ENCODE measurements at regions of chr10 and their contacts with region 1.

Region 1: DNA sequence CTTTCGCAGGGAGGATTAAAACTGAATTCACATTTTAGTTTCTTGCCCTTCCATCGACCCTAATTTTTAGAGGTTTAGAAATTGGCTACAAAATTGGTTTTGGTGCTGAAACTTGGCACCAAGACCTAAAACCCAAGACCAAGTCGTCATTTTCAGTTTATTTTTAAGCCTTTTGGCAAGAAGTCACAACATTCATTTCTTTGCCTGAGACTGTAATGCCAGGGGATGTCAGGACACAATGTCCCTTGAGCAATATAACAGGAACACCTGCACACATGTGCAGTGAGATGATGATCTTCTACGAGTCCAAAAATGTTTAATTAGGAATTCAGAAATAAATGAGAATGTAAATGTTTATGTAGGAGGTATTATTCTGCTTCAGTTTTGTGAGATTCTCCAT is 335.4 kb upstream of the ANKRD30A start:
- DNase-seq: no peak
- ATAC-seq: no peak

Region 2: DNA sequence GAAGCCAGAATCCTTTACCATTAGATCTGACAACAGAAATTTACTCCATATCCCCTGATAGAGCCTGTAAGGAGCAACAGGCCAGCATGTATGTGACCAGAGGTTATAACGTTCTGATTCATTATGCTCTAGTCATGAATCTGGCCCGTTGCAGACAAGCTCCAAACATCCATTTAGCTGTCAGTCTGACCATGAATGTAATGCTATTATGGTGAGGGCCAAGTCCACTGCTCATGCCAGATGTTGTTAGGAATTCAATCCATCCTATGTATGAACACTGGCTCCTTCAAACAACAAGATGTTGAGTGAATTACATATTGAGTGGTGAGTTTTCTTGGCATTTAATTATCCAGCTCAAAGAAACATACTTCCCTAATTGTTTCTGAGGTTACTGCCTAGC is 274.7 kb before region 1 on chr10:
- intact Hi-C with region 1: no loop called
- DNase-seq: no peak
- ATAC-seq: no peak

Region 3: GRCh38 chr10:36581237-36581636 is 208.7 kb before region 1 on chr10:
- intact Hi-C with region 1: no loop called
- DNase-seq: no peak
- ATAC-seq: no peak

Region 4: GRCh38 chr10:36801660-36802059 is 11.7 kb after region 1 on chr10:
- intact Hi-C with region 1: loop called in 1 of 2 experiments (anchors 1 kb)
- DNase-seq: no peak
- ATAC-seq: no peak

Region 5: DNA sequence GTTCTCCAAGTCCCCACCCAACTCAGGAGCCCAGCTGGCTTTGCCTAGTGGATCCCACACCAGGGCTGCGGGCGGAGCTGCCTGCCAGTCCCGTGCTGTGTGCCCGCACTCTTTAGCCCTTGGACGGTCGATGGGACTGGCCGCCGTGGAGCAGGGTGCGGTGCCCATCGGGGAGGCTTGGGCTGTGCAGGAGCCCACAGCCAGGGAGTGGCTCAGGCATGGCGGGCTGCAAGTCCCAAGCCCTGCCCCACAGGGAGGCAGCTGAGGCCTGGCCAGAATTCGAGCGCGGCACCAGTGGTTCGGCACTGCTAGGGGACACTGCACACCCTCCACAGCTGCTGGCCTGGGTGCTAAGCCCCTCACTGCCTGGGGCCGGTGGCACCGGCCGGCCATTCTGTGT is 495.1 kb after region 1 on chr10:
- intact Hi-C with region 1: no loop called
- DNase-seq: no peak
- ATAC-seq: no peak

Measured in left cardiac atrium (tissue), 4 donors.